ENCODE measurements at regions of chr22 and their contacts with region 1.

Region 1: DNA sequence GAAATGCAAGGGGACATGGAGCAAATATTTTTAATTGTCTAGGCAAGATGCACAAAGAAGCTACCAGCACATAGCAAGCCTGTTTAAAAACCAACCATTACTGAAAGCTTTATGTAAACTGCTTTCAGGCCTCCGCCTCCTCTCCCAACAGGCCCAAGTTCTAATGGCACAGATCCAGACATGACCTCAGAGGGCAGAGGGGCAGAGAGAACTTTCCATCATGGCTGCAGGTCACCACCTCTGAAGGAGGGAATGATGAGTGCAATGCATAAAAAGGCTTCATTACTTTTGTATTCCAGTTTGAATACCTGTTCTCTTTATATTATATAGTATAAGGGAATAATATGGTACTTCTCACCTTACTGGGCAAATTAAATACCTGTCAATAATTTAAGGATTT is 15.2 kb downstream of the DDX17 start:
- DNase-seq: no peak
- H3K4me3 ChIP-seq: no peak overlapping the region
- H3K27ac ChIP-seq: no peak overlapping the region
- H3K4me1 ChIP-seq: peaks cover 0 to 2% (median 0%) of the 10 kb centered on the region in 4 experiments
- H3K27me3 ChIP-seq: no peaks in the 10 kb centered on the region

Region 2: DNA sequence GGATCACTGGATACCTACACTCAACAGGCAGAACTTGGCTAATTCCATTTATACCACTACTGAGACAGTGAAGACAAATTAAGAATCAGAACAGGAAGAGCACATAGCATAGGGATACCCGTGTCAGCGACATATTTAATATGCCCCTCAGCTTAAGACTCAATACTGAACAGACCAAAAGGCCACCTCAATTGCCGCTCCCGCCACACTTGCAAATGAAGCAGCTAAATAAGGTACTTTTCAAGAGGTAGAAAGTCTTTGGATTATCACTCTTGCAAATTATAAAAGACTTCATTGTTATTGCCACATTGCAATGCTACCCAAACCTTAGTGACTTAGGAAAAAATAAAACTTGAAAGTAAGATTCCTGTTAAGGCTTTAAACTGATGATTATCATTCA is 12.1 kb after region 1 on chr22:
- CTCF ChIA-PET with region 1: interaction called, 13 read pairs
- POLR2A ChIA-PET with region 1: interaction called, 13 read pairs
- DNase-seq: no peak
- H3K4me3 ChIP-seq: peak overlapping the region in 4 of 7 experiments; percentile 58 to 97 (median 96)
- H3K27ac ChIP-seq: peak overlapping the region in 1 of 2 experiments; percentile 40
- H3K4me1 ChIP-seq: peaks cover 23 to 42% (median 28%) of the 10 kb centered on the region in 4 experiments
- H3K27me3 ChIP-seq: no peaks in the 10 kb centered on the region

Measured in common myeloid progenitor, CD34-positive (primary cell).